Prostate gland (tissue), 2 donors: ENCODE measurements at regions of chr7 and their contacts with region 1.

Region 1: DNA sequence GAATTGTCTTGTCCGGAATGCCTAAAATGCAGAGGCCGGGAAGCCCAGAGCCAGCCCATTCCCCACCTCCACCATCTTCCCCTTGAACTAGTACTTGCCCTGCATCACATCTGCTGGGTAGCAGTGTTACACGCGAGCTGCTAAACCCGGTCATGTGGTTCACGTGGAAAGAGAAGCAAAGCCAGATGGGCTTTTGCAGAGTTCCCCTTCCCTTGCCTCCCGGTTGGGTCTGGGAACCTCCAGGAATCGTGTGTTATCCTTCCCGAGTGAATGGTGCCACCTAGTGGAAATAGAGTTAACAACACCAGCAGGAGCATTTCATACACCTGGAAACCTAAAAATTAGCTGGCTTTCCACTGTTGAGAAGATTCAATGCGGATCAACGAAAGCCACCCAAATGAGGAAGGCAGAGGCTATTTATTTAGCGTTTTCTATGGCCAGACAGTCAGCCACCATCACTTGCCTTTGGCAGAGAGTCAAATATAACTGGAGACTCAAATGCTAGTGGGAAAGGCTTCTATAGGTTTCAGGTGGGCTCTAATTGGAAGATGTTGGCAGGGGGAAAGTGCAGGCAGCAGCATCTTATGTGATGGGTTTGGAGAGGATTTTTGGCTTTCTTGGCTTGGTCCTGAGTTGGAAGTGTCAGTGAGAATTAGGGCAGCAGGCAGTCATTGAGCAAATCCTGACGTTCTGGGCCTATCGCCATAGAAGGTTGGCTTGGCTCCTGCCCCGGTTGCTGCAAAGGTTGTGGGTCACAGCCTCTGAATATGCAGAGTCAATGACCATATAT is 12.9 kb upstream of the DENND2A start:
- DNase-seq: peak; percentile 75
- H3K4me3 ChIP-seq: no peak overlapping the region
- H3K27ac ChIP-seq: no peak overlapping the region
- H3K4me1 ChIP-seq: peaks cover 9% of the 10 kb centered on the region
- H3K27me3 ChIP-seq: no peaks in the 10 kb centered on the region
- CTCF ChIP-seq: peak; percentile 68 to 90 (median 84)
- POLR2A ChIP-seq: no peak

Region 2: GRCh38 chr7:140175221-140176121 is 478.0 kb before region 1 on chr7:
- intact Hi-C with region 1: loop called (anchors 10 kb)
- DNase-seq: peak; percentile 93
- H3K4me3 ChIP-seq: peak overlapping the region; percentile 89 to 91
- H3K27ac ChIP-seq: peak overlapping the region; percentile 98 to 99
- H3K4me1 ChIP-seq: no peaks in the 10 kb centered on the region
- H3K27me3 ChIP-seq: no peaks in the 10 kb centered on the region
- CTCF ChIP-seq: peak; percentile 61 to 94 (median 90)
- POLR2A ChIP-seq: peak; percentile 95

Region 3: GRCh38 chr7:140479062-140479738 is 174.3 kb before region 1 on chr7 and contains the start of gene MKRN1:
- intact Hi-C with region 1: loop called (anchors 5 kb)
- DNase-seq: peak; percentile 96
- H3K4me3 ChIP-seq: peak within 1 kb of the TSS; percentile 92 to 100
- H3K27ac ChIP-seq: peak within 1 kb of the TSS; percentile 91 to 92
- H3K4me1 ChIP-seq: no peaks in the 10 kb centered on the region
- H3K27me3 ChIP-seq: no peaks in the 10 kb centered on the region
- CTCF ChIP-seq: peak in 1 of 4 experiments; percentile 3
- POLR2A ChIP-seq: peak; percentile 87
- total RNA-seq, gene MKRN1: 69.0 to 108 TPM

Region 4: DNA sequence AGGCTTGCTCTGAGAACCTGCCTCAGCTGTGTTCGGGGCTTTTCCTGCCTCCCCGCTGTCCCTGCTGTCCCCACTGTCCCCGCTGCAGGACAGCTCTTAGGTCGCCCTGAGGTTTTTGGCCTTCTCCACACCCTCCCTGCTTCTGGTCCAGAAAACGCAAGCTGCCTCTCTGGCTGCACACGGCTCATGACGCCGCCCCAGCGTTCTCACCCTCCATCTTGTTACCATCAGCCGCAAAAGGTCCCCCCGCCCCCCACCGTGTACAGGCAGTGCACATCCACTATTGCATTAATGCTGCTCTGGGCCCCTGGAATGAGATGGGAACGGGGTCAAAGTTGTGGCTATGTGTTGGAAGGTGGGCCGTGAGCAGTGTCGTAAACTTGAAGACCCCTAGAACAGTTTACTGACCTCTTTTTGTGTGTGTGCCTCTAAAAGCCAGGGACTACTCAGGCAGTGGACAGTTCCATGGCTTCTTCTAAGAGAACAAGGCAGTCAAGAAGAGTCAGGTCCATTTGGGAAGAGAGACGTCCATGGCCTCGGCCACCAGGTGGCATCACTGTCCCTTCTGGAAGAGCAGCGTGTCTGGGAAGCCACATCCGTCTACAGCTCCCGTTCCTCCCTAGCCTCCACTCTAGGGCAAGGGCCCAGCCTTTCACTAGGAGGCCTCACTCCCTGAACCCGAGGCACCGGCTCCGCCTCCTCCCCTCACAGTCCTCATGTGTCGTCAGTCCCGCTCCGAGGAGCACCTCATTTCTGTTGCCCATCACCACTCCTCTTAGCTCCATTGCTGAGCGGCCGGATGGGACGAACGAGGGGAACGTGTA is 135.8 kb before region 1 on chr7:
- intact Hi-C with region 1: loop called (anchors 1 kb)
- DNase-seq: peak; percentile 91
- H3K4me3 ChIP-seq: no peak overlapping the region
- H3K27ac ChIP-seq: peak overlapping the region; percentile 37 to 75
- H3K4me1 ChIP-seq: no peaks in the 10 kb centered on the region
- H3K27me3 ChIP-seq: no peaks in the 10 kb centered on the region
- CTCF ChIP-seq: peak; percentile 81 to 92 (median 88)
- POLR2A ChIP-seq: no peak

Region 5: DNA sequence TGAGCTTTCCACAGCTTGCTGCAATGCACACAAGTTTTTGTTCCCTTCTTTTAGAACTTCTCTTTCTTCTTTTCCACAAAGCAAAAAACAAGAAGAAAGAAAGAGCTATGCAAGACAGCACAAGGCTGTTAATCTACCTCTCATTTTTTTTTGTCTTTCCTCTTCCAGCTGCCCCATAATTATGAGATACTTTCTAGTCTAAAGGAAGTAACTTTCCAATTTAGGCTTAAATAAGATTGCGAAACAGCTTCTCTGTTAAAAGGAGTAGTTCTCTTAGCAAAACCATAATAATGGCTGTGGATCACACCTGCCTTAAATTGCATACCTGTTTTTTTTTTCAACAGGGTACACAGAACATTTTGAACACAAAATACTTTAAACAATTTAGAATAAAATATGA is 99.0 kb after region 1 on chr7:
- intact Hi-C with region 1: no loop called
- DNase-seq: no peak
- H3K4me3 ChIP-seq: no peak overlapping the region
- H3K27ac ChIP-seq: no peak overlapping the region
- H3K4me1 ChIP-seq: no peaks in the 10 kb centered on the region
- H3K27me3 ChIP-seq: no peaks in the 10 kb centered on the region
- CTCF ChIP-seq: no peak
- POLR2A ChIP-seq: no peak

Region 6: GRCh38 chr7:141001122-141001521 is 347.6 kb after region 1 on chr7:
- intact Hi-C with region 1: no loop called
- DNase-seq: no peak
- H3K4me3 ChIP-seq: no peak overlapping the region
- H3K27ac ChIP-seq: no peak overlapping the region
- H3K4me1 ChIP-seq: no peaks in the 10 kb centered on the region
- H3K27me3 ChIP-seq: no peaks in the 10 kb centered on the region
- CTCF ChIP-seq: no peak
- POLR2A ChIP-seq: no peak